ENCODE measurements at regions of chr14 and their contacts with region 1.

Region 1: GRCh38 chr14:33792720-33793368 is 158.0 kb downstream of the EGLN3 start:
- DNase-seq: peak; percentile 70 to 85 (median 81)
- H3K4me3 ChIP-seq: peak overlapping the region in 3 of 7 experiments; percentile 6 to 55 (median 37)
- H3K27ac ChIP-seq: no peak overlapping the region
- H3K4me1 ChIP-seq: peaks cover 0 to 13% (median 8%) of the 10 kb centered on the region in 4 experiments
- H3K27me3 ChIP-seq: peaks cover 2 to 25% (median 14%) of the 10 kb centered on the region in 5 experiments

Region 2: DNA sequence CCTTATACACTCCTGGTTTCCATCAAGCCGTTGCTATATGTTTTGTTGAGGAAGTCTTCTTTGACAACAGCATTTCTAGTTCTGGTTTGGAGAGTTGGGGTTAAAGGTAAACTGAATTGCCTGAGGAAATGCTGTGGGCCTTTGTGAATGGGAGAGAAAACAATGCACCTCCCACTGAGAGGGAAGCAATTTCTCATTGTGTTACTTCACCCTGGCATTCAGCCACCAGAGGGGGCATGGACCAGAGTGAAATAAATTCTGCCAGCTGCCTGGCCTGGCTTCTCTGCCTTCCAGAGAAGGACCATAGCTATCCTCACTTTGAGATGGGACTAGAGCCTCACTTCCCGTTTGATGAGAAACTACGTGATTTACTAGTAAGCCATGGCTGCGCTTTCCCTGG is 317.2 kb before region 1 on chr14:
- CTCF ChIA-PET with region 1: interaction called, 89 read pairs
- POLR2A ChIA-PET with region 1: no interaction called
- DNase-seq: peak; percentile 66 to 80 (median 73)
- H3K4me3 ChIP-seq: no peak overlapping the region
- H3K27ac ChIP-seq: no peak overlapping the region
- H3K4me1 ChIP-seq: peaks cover 0 to 1% (median 0%) of the 10 kb centered on the region in 4 experiments
- H3K27me3 ChIP-seq: no peaks in the 10 kb centered on the region

Region 3: GRCh38 chr14:33737446-33737845 is 55.4 kb before region 1 on chr14:
- CTCF ChIA-PET with region 1: no interaction called
- POLR2A ChIA-PET with region 1: no interaction called
- DNase-seq: no peak
- H3K4me3 ChIP-seq: no peak overlapping the region
- H3K27ac ChIP-seq: no peak overlapping the region
- H3K4me1 ChIP-seq: peaks cover 0 to 6% (median 2%) of the 10 kb centered on the region in 4 experiments
- H3K27me3 ChIP-seq: no peaks in the 10 kb centered on the region

Region 4: GRCh38 chr14:33805593-33805992 is 12.7 kb after region 1 on chr14:
- CTCF ChIA-PET with region 1: interaction called, 16 read pairs
- POLR2A ChIA-PET with region 1: no interaction called
- DNase-seq: no peak
- H3K4me3 ChIP-seq: no peak overlapping the region
- H3K27ac ChIP-seq: no peak overlapping the region
- H3K4me1 ChIP-seq: peaks cover 0 to 4% (median 0%) of the 10 kb centered on the region in 4 experiments
- H3K27me3 ChIP-seq: peaks cover 8 to 23% (median 18%) of the 10 kb centered on the region in 5 experiments